ENCODE measurements at regions of chr20 and their contacts with region 1.

Region 1: GRCh38 chr20:20706285-20706684 is 6.2 kb downstream of the RALGAPA2 start:
- DNase-seq: no peak
- H3K4me3 ChIP-seq: no peak overlapping the region
- H3K27ac ChIP-seq: no peak overlapping the region
- H3K4me1 ChIP-seq: peaks cover 16% of the 10 kb centered on the region
- H3K27me3 ChIP-seq: no peaks in the 10 kb centered on the region
- CTCF ChIP-seq: no peak
- POLR2A ChIP-seq: no peak

Region 2: DNA sequence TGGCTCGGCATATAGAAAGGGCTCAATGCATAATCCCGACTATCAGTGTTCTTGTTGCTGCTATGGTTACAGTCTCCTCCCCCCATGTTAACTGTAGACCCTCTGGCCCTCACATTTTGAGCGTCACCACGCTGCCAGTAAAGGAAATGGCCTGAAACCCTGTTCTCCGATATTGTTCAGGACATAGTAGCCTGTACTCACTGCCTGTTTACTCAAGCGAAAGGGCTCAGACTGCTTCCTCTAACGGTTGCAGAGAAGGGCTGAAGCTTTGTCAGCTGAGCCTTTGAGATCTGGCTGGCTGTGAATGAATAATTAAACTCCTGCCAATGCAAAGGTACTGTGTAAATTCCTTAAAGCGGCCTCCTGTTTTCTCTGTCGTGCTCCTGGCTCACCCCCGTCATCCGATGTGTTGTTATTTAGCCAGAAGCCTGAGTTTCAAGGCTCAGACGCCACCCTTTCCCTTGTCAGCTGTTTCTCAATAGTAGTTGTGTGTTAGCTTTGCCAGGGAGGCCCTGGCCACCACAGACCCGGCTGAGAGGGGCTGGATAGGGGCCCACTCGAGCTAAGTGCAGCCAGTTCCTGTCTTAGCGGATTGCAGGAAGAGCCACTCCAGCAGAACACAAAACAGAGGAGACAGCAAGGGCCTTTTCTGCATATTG is 37.4 kb after region 1 on chr20:
- CTCF ChIA-PET with region 1: no interaction called
- POLR2A ChIA-PET with region 1: interaction called, 3 read pairs
- dilution Hi-C with region 1: no loop called
- intact Hi-C with region 1: loop called (anchors 5 kb)
- DNase-seq: peak; percentile 97
- H3K4me3 ChIP-seq: peak overlapping the region in 1 of 3 experiments; percentile 7
- H3K27ac ChIP-seq: peak overlapping the region; percentile 96
- H3K4me1 ChIP-seq: peaks cover 15% of the 10 kb centered on the region
- H3K27me3 ChIP-seq: no peaks in the 10 kb centered on the region
- CTCF ChIP-seq: no peak
- POLR2A ChIP-seq: peak; percentile 49

Measured in endothelial cell of umbilical vein (primary cell).